K562 (cell line): ENCODE measurements at regions of chr7 and their contacts with region 1.

Region 1: DNA sequence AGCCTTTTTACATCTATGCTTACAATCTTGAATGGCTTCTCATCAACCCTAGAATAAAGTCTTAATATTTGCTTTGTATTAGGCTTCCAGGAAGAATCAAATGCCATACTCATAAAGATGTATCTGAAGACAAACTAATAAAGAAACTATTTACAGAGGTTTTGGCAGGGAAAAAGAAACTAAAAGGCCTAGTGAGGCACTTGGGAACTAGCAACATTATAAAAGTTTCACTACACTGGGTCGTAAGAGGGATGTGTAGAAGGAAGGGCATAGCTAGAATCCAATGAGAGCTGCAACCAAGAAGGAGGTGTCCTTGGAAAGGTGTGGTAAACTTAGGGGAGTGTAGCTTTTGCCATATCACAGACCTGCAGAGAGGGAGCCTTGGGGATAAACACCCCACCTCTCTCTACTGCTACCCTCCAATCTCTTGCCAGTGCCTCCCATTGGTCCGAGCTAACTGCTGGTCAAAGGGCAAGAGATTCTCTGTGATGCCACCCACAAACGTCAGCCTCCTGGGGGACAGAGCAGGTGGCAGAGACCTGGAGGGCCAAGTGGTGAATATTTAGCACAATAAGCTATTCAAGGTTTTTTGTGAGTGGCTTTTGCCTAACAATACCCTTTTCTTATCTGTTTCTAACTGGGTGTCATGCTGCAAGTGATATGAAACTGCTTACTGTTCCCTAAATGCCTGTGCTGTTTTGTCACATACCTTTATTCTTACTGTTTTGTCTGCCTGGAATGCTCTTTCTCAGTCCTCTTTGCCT is 60.7 kb downstream of the CPED1 start:
- DNase-seq: peak in 3 of 4 experiments; percentile 40 to 82 (median 79)
- ATAC-seq: peak; percentile 71
- H3K4me3 ChIP-seq: no peak overlapping the region
- H3K27ac ChIP-seq: peak overlapping the region; percentile 69
- H3K4me1 ChIP-seq: peaks cover 23 to 59% of the 10 kb centered on the region in 2 experiments
- H3K27me3 ChIP-seq: no peaks in the 10 kb centered on the region
- CTCF ChIP-seq: no peak
- EP300 ChIP-seq: peak; percentile 90
- POLR2A ChIP-seq: no peak
- RAD21 ChIP-seq: peak; percentile 5 to 31; a peak in 2 of 4 replicates

Region 2: DNA sequence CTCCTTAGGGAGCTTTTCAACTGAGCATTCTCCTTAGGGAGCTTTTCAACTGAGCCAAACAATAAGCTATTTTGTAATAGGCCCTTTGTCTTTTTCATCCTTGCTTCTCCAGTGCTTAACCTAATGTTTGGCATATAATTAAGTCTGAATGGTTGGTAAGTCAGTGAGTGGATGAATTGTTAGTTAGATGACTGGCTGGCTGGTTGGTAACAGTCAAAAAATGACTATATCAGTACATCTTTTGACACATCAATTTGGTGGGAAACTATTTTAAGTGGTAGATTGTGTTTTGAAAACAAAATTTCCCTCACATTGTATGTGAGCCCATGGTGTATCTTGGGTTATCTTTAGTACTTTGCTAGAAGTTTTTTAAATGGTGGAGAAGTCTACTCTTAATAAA is 82.2 kb before region 1 on chr7:
- CTCF ChIA-PET with region 1: no interaction called
- POLR2A ChIA-PET with region 1: no interaction called
- in situ Hi-C with region 1: no loop called
- intact Hi-C with region 1: no loop called
- DNase-seq: no peak
- ATAC-seq: no peak
- H3K4me3 ChIP-seq: no peak overlapping the region
- H3K27ac ChIP-seq: no peak overlapping the region
- H3K4me1 ChIP-seq: no peaks in the 10 kb centered on the region
- H3K27me3 ChIP-seq: no peaks in the 10 kb centered on the region
- CTCF ChIP-seq: no peak
- EP300 ChIP-seq: no peak
- POLR2A ChIP-seq: no peak
- RAD21 ChIP-seq: no peak

Region 3: GRCh38 chr7:121061677-121062582 is 12.7 kb after region 1 on chr7:
- CTCF ChIA-PET with region 1: no interaction called
- POLR2A ChIA-PET with region 1: interaction called, 14 read pairs
- in situ Hi-C with region 1: no loop called
- intact Hi-C with region 1: no loop called
- DNase-seq: peak in 1 of 4 experiments; percentile 1
- ATAC-seq: no peak; the same call in 2 of the 3 replicates
- H3K4me3 ChIP-seq: no peak overlapping the region
- H3K27ac ChIP-seq: no peak overlapping the region
- H3K4me1 ChIP-seq: no peaks in the 10 kb centered on the region
- H3K27me3 ChIP-seq: no peaks in the 10 kb centered on the region
- CTCF ChIP-seq: no peak
- EP300 ChIP-seq: no peak
- POLR2A ChIP-seq: no peak
- RAD21 ChIP-seq: no peak